ENCODE measurements at regions of chr4 and their contacts with region 1.

Region 1: GRCh38 chr4:17614416-17615299 is at the start of gene MED28:
- DNase-seq: peak; percentile 98
- H3K4me3 Mint-ChIP-seq: peak within 1 kb of the TSS; percentile 98
- H3K27ac Mint-ChIP-seq: peak within 1 kb of the TSS; percentile 85
- H3K4me1 Mint-ChIP-seq: peaks cover 49% of the 10 kb centered on the region
- H3K27me3 Mint-ChIP-seq: no peaks in the 10 kb centered on the region
- total RNA-seq, gene MED28: 52.3 to 59.5 TPM

Region 2: DNA sequence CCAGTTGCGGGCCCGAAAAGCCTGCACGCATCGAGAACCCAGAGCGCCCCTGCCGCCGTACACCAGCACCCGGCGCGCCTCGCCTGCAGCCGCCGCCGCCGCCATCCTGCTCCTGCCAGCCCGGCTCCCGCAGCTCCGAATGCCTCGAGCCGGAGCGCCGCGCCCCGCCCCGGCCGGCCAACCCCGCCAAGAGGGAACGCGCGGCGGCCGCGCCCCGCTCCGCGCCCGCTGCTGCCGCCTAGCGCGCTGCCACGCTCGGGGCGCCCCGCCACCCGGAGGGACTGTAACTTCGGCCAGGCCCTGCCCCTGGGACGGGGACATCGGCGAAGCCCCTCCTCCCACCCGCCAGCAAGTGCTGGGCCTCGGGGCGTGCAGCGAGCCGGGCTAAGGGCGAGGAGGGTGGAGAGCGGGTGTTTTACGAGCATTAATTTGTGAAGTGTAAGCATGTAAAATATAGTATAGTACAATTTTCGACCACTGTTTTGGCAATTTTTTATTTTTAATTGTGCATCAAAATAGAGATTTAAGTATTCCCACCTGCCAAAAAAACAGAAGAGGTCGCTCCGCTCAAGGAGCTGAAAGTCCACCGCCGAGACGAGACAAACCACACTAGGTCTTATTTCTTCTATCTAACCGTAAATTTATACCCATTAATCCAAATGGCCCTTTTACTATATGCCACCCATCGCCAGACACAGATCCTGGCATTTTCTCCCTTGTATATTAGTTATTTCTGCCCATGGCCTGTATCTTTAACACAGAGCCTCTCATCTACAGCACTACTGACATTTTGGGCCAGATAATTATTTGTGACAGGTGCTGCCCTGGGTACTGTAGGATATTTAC is 102.5 kb before region 1 on chr4 and contains the start of gene QDPR:
- CTCF ChIA-PET with region 1: no interaction called
- intact Hi-C with region 1: loop called (anchors 1 kb)
- DNase-seq: peak; percentile 76
- H3K4me3 Mint-ChIP-seq: peak within 1 kb of the TSS; percentile 89
- H3K27ac Mint-ChIP-seq: peak within 1 kb of the TSS; percentile 63
- H3K4me1 Mint-ChIP-seq: peaks cover 21% of the 10 kb centered on the region
- H3K27me3 Mint-ChIP-seq: no peaks in the 10 kb centered on the region
- total RNA-seq, gene QDPR: 42.2 to 43.8 TPM

Region 3: GRCh38 chr4:17636696-17637622 is 22.3 kb after region 1 on chr4:
- CTCF ChIA-PET with region 1: interaction called, 19 read pairs
- intact Hi-C with region 1: no loop called
- DNase-seq: peak; percentile 82
- H3K4me3 Mint-ChIP-seq: no peak overlapping the region
- H3K27ac Mint-ChIP-seq: no peak overlapping the region
- H3K4me1 Mint-ChIP-seq: no peaks in the 10 kb centered on the region
- H3K27me3 Mint-ChIP-seq: no peaks in the 10 kb centered on the region

Region 4: GRCh38 chr4:18021722-18022571 is 407.3 kb after region 1 on chr4 and contains the start of gene LCORL:
- CTCF ChIA-PET with region 1: no interaction called
- intact Hi-C with region 1: loop called (anchors 1 kb)
- DNase-seq: peak; percentile 89
- H3K4me3 Mint-ChIP-seq: peak within 1 kb of the TSS; percentile 98
- H3K27ac Mint-ChIP-seq: peak within 1 kb of the TSS; percentile 79
- H3K4me1 Mint-ChIP-seq: peaks cover 14% of the 10 kb centered on the region
- H3K27me3 Mint-ChIP-seq: peaks cover 16% of the 10 kb centered on the region
- total RNA-seq, gene LCORL: 8.6 to 9.4 TPM